PC-9 (cell line): ENCODE measurements at regions of chr20 and their contacts with region 1.

Region 1: DNA sequence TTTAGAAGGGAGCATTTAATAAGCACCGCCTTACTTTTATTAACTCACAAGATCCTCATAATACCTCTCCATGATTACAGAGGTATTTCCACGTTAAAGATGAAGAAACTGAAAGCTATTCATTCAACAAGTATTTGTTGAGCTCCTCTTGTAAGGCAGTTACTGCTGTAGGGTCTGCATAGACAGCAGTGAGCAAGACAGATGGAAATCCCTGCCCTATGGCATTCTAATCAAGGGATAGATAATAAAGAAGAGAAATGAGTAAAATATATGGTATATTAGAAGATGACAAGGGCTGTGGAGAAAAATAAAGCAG is 77.8 kb upstream of the CTNNBL1 start:
- DNase-seq: no peak
- H3K4me3 ChIP-seq: no peak overlapping the region
- H3K27ac ChIP-seq: no peak overlapping the region
- H3K4me1 ChIP-seq: no peaks in the 10 kb centered on the region
- H3K27me3 ChIP-seq: peaks cover 77% of the 10 kb centered on the region
- CTCF ChIP-seq: no peak; the same call in 1 of the 2 replicates

Region 2: GRCh38 chr20:38217791-38218575 is 601.9 kb after region 1 on chr20:
- CTCF ChIA-PET with region 1: no interaction called
- POLR2A ChIA-PET with region 1: no interaction called
- intact Hi-C with region 1: no loop called
- DNase-seq: peak; percentile 78 to 81
- H3K4me3 ChIP-seq: no peak overlapping the region
- H3K27ac ChIP-seq: peak overlapping the region; percentile 52; the same call in 1 of the 2 replicates
- H3K4me1 ChIP-seq: peaks cover 22% of the 10 kb centered on the region
- H3K27me3 ChIP-seq: no peaks in the 10 kb centered on the region
- CTCF ChIP-seq: no peak

Region 3: GRCh38 chr20:39117491-39117890 is 1501.4 kb after region 1 on chr20:
- CTCF ChIA-PET with region 1: no interaction called
- POLR2A ChIA-PET with region 1: interaction called, 10 read pairs
- intact Hi-C with region 1: no loop called
- DNase-seq: peak in 1 of 2 experiments; percentile 64
- H3K4me3 ChIP-seq: no peak overlapping the region
- H3K27ac ChIP-seq: no peak overlapping the region
- H3K4me1 ChIP-seq: no peaks in the 10 kb centered on the region
- H3K27me3 ChIP-seq: peaks cover 22% of the 10 kb centered on the region
- CTCF ChIP-seq: no peak